ENCODE measurements at regions of chr2 and their contacts with region 1.

Region 1: GRCh38 chr2:176865336-176865735 is 347.3 kb upstream of the HNRNPA3 start:
- DNase-seq: no peak
- ATAC-seq: no peak
- H3K4me3 ChIP-seq: no peak overlapping the region
- H3K27ac ChIP-seq: no peak overlapping the region
- H3K4me1 ChIP-seq: no peaks in the 10 kb centered on the region
- H3K27me3 ChIP-seq: no peaks in the 10 kb centered on the region
- CTCF ChIP-seq: no peak
- POLR2A ChIP-seq: no peak
- RAD21 ChIP-seq: no peak

Region 2: GRCh38 chr2:176967911-176968450 is 102.6 kb after region 1 on chr2:
- CTCF ChIA-PET with region 1: no interaction called
- POLR2A ChIA-PET with region 1: no interaction called
- dilution Hi-C with region 1: no loop called
- in situ Hi-C with region 1: no loop called
- intact Hi-C with region 1: loop called (anchors 5 kb)
- DNase-seq: no peak
- ATAC-seq: no peak
- H3K4me3 ChIP-seq: no peak overlapping the region
- H3K27ac ChIP-seq: no peak overlapping the region
- H3K4me1 ChIP-seq: no peaks in the 10 kb centered on the region
- H3K27me3 ChIP-seq: no peaks in the 10 kb centered on the region
- CTCF ChIP-seq: no peak
- POLR2A ChIP-seq: no peak
- RAD21 ChIP-seq: no peak